Activated naive CD4-positive, alpha-beta T cell treated with anti-CD3 and anti-CD28 coated beads for 36 hours (primary cell): ENCODE measurements at regions of chr2 and their contacts with region 1.

Region 1: GRCh38 chr2:181104512-181105115 is 124.2 kb downstream of the UBE2E3 start:
- DNase-seq: peak; percentile 35
- H3K4me3 Mint-ChIP-seq: peak overlapping the region; percentile 20
- H3K27ac Mint-ChIP-seq: peak overlapping the region; percentile 29
- H3K4me1 Mint-ChIP-seq: peaks cover 41% of the 10 kb centered on the region
- H3K27me3 Mint-ChIP-seq: no peaks in the 10 kb centered on the region

Region 2: DNA sequence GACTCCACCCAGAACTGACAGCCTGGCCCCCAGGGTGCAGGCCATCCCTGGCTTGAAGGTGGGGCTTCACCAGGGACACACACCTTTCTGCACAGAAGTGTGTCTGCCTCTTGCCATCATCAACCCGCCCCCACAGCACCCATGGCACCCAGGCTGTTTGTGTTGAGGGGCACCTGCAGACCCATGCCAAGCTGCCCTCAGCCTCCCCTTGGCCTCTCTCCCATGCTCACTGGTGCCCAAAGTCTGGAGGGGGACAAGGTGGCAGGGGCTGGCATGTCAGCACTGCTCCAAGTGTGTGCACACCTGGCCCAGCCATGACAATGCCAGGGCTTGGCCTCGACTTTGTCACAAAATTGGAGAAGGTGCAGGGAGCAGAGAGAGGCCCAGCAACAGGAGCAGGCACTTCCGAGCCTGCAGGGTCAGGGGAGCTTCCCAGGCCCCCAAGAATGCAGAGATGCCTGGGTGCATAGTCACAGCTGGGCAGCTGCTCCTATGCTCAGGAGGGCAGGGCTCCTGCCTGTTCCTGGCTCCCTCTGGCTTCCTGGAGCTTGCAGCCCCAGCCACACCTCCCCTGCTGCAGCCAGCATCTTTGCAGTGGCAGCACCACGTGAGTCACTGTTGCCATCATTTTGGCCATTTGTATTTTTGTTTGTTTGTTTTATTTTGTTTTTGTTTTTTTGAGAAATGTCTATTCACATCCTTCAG is 404.8 kb before region 1 on chr2:
- CTCF ChIA-PET with region 1: no interaction called
- intact Hi-C with region 1: no loop called
- DNase-seq: no peak
- H3K4me3 Mint-ChIP-seq: no peak overlapping the region
- H3K27ac Mint-ChIP-seq: no peak overlapping the region
- H3K4me1 Mint-ChIP-seq: no peaks in the 10 kb centered on the region
- H3K27me3 Mint-ChIP-seq: no peaks in the 10 kb centered on the region

Region 3: GRCh38 chr2:180842461-180842860 is 262.2 kb before region 1 on chr2:
- CTCF ChIA-PET with region 1: no interaction called
- intact Hi-C with region 1: no loop called
- DNase-seq: no peak
- H3K4me3 Mint-ChIP-seq: no peak overlapping the region
- H3K27ac Mint-ChIP-seq: no peak overlapping the region
- H3K4me1 Mint-ChIP-seq: no peaks in the 10 kb centered on the region
- H3K27me3 Mint-ChIP-seq: peaks cover 2% of the 10 kb centered on the region

Region 4: DNA sequence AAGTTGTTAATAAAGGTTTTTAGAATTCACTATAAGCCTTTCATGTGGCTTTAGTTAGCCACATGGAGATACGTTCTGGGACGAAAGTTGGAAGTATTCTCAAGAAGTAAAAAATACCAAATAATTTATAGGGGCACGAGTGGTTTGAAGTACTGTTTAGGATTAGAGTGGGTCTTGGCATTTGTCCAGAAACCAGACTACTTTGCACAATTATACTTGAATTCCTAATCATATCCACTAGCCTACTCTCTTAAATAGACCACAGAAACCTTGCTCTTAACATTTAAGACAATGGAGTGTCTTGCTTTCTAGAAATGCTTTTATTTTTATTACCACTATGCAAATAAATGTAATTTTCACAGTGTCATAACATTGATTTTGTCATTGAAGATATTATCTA is 79.6 kb before region 1 on chr2:
- CTCF ChIA-PET with region 1: no interaction called
- intact Hi-C with region 1: no loop called
- DNase-seq: no peak
- H3K4me3 Mint-ChIP-seq: no peak overlapping the region
- H3K27ac Mint-ChIP-seq: no peak overlapping the region
- H3K4me1 Mint-ChIP-seq: peaks cover 7% of the 10 kb centered on the region
- H3K27me3 Mint-ChIP-seq: no peaks in the 10 kb centered on the region

Region 5: DNA sequence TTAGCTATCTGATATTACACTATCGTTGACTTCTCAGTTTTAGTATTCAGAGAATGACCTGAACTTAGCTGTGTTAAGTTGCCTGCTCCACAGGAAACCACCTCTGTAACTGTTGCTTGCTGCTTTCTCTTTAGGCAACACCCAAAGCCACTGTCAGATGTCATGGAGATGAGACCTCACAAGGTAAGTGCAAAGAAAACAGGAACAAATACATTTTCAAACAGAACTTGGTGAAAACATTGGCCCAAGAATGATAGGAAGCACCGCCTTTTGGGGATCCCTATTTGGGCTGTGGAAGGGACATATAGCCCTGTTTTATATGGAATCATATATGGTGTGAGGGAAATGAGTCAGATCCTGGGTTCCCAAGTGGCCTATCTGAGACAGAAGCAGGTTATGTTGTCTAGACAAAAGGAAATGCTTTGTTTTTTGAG is 19.2 kb after region 1 on chr2:
- CTCF ChIA-PET with region 1: interaction called, 15 read pairs
- intact Hi-C with region 1: loop called (anchors 1 kb)
- DNase-seq: peak; percentile 65
- H3K4me3 Mint-ChIP-seq: peak overlapping the region; percentile 65
- H3K27ac Mint-ChIP-seq: peak overlapping the region; percentile 89
- H3K4me1 Mint-ChIP-seq: peaks cover 54% of the 10 kb centered on the region
- H3K27me3 Mint-ChIP-seq: no peaks in the 10 kb centered on the region

Region 6: DNA sequence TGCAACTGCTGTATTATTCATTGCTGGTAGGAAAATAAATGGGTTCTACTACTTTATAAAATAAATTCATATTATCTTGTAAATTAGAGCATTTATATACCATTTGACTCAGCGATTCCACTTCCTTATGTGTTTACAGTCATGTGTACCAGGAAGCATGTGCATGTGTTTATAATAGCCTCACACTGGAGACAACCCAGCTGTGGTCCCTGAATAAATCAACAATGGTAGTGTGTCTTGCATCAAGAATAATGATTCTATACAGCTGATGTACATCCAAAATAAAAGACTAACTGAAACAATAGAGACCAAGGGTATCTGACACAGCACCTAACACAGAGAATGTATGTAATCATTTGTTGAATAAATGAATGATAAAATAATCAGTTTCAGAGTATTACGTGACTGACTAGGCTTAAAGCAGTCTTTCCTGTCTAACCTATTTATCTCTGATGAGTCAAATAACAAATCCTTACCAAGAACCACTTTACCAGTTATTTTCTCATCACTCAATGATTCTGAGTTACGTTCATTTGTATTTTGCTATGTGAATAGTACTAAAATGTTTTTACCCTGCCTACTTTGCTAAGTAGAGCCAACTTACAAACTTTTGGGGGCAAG is 92.6 kb after region 1 on chr2:
- CTCF ChIA-PET with region 1: interaction called, 4 read pairs
- intact Hi-C with region 1: loop called (anchors 1 kb)
- DNase-seq: no peak
- H3K4me3 Mint-ChIP-seq: no peak overlapping the region
- H3K27ac Mint-ChIP-seq: peak overlapping the region; percentile 26
- H3K4me1 Mint-ChIP-seq: peaks cover 38% of the 10 kb centered on the region
- H3K27me3 Mint-ChIP-seq: no peaks in the 10 kb centered on the region

Region 7: DNA sequence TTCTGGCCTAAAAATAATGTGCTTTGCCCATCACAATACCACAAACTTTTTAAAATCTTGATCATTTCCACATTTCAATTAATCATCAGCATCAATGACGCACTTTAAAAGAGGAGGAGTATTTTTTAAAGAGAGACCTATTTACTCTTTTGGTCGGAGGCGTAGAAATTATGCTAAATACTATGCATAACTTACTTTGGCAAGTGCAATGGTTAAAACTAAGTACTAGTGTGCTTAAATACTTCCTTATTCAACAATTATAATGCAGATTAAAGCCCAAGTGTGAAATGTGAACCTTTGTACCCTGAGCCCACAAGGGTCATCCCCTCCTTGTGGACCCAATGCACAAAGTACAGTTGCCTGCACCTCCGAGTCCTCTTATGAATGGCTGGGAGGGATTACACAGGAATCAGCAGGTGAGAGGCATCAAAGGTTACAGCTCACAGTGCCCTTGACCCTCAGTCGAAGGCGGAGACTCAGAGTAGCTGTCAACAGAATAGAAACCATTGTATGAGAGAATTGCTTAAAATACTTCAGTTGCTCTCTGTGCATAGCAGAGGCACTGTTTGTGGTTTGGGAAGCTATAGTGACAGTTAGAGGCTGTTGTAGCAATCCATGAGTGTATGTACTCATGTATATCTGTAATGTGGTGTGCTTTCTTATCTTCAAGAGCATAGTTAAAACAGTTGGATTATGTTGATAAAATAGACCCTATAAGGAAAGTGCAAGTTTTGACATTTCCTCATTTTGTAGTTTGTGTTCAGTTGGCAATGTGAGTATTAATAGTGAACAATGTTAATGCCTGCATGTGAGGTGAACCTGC is 200.9 kb after region 1 on chr2:
- CTCF ChIA-PET with region 1: interaction called, 13 read pairs
- intact Hi-C with region 1: loop called (anchors 1 kb)
- DNase-seq: peak; percentile 68
- H3K4me3 Mint-ChIP-seq: peak overlapping the region; percentile 61
- H3K27ac Mint-ChIP-seq: peak overlapping the region; percentile 91
- H3K4me1 Mint-ChIP-seq: peaks cover 64% of the 10 kb centered on the region
- H3K27me3 Mint-ChIP-seq: no peaks in the 10 kb centered on the region

Region 8: GRCh38 chr2:181466661-181467576 is 362.3 kb after region 1 on chr2:
- CTCF ChIA-PET with region 1: interaction called, 71 read pairs
- intact Hi-C with region 1: loop called (anchors 1 kb)
- DNase-seq: peak; percentile 92
- H3K4me3 Mint-ChIP-seq: no peak overlapping the region
- H3K27ac Mint-ChIP-seq: peak overlapping the region; percentile 54
- H3K4me1 Mint-ChIP-seq: peaks cover 86% of the 10 kb centered on the region
- H3K27me3 Mint-ChIP-seq: no peaks in the 10 kb centered on the region

Region 9: DNA sequence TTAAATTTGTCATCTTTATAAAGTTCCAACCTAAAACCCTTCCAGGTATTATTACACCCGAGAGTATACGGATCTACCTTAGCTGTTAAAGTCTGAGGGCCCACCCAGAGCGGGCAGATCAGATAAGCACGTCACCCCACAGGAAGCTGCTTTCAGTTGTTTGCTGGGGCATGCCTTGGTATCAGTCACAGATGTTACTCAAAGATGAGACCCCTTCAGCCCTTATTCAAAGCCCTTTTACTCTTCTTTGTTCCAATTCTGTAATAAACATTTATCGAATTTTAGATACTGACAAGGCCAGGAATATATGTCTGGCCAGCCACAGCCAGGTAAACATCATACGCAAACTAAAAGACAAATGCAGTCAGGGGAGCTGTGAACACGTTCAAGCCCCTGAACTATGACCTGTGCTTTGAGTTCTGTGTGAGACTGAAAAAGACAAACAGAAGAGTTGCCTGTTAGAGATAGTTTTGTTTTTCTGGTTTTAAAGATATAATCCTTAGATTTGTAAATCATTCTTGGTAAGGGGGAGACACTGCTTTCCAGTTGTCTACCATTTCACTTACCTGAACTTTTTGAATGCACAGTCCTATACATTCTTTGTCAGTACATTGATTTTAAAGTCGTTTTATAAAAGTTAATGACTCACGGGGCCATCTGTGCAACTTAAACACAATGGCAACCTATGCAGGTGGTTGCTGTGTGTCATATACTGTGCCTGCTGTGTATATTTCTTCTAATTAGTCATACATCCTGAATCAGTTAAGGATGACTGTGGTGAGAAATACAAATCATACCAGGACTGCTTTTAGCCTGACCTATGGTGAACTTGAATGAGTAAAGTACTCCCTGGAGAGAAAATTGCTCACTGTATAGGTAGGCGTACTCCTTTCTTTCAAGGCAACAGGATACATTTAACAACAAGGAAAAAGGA is 686.4 kb after region 1 on chr2:
- CTCF ChIA-PET with region 1: no interaction called
- intact Hi-C with region 1: loop called (anchors 1 kb)
- DNase-seq: peak; percentile 55
- H3K4me3 Mint-ChIP-seq: no peak overlapping the region
- H3K27ac Mint-ChIP-seq: no peak overlapping the region
- H3K4me1 Mint-ChIP-seq: peaks cover 19% of the 10 kb centered on the region
- H3K27me3 Mint-ChIP-seq: peaks cover 12% of the 10 kb centered on the region